Activated CD4-positive, alpha-beta T cell treated with anti-CD3 and anti-CD28 coated beads, Interleukin-2, amount 10 ng/mL, durations not matched to agents 7 days and 5 days (primary cell): ENCODE measurements at regions of chr2 and their contacts with region 1.

Region 1: DNA sequence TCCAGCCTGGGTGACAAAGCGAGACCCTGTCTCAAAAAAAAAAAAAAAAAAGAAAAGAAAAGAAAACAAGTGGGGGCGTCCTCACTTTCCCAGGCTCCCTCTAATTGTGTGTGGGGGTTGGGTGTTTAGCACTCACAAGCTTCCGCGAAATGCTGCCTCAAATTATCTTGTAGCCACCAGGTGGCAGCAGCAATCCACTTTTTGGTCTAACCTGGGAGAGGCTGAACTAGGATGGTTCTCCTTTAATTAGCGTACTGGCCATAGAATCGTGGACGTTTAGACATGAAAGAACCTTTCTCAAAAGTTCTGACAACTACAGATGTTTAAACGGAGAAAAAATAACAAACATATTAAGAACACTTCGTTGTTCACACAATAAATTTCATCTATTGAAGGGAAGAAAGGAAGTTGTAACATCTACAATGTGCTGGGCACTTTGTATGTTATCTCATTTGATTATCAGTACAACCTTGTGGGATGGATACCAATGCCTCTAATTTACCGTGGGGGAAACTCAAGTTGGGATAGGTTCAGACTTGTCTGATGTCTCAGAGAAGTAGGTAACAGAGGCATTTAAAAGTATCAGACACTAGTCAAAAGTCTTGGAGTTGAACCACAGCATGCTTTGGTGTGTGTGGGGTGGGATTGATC is 122.7 kb upstream of the NABP1 start:
- DNase-seq: peak; percentile 85
- H3K4me3 Mint-ChIP-seq: no peak overlapping the region
- H3K27ac Mint-ChIP-seq: no peak overlapping the region
- H3K4me1 Mint-ChIP-seq: peaks cover 8% of the 10 kb centered on the region
- H3K27me3 Mint-ChIP-seq: peaks cover 16% of the 10 kb centered on the region

Region 2: GRCh38 chr2:191501561-191502168 is 53.6 kb before region 1 on chr2:
- CTCF ChIA-PET with region 1: no interaction called
- POLR2A ChIA-PET with region 1: no interaction called
- DNase-seq: no peak
- H3K4me3 Mint-ChIP-seq: no peak overlapping the region
- H3K27ac Mint-ChIP-seq: no peak overlapping the region
- H3K4me1 Mint-ChIP-seq: no peaks in the 10 kb centered on the region
- H3K27me3 Mint-ChIP-seq: peaks cover 5% of the 10 kb centered on the region

Region 3: DNA sequence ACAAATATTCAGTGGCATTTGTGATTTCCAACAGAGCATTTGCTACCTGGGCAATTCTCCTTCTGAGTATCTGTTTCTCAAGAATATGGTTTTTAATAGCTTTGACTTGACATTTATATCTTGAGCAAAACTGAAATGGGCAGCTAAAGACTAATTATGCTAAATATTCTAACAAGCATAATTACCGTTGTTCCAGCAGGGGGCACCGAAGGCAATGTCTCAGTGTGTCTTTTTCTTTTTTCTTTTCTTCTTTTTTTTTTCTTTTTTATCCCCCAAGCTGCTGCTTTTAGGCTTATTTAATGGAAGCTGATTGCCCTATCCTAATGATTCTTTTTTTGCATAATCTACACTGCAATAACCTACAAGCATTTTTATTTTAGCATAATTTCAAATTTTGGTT is 16.1 kb before region 1 on chr2:
- CTCF ChIA-PET with region 1: no interaction called
- POLR2A ChIA-PET with region 1: no interaction called
- DNase-seq: peak; percentile 52
- H3K4me3 Mint-ChIP-seq: no peak overlapping the region
- H3K27ac Mint-ChIP-seq: no peak overlapping the region
- H3K4me1 Mint-ChIP-seq: no peaks in the 10 kb centered on the region
- H3K27me3 Mint-ChIP-seq: peaks cover 3% of the 10 kb centered on the region

Region 4: GRCh38 chr2:191582355-191582754 is 27.1 kb after region 1 on chr2:
- CTCF ChIA-PET with region 1: no interaction called
- POLR2A ChIA-PET with region 1: no interaction called
- DNase-seq: no peak
- H3K4me3 Mint-ChIP-seq: no peak overlapping the region
- H3K27ac Mint-ChIP-seq: no peak overlapping the region
- H3K4me1 Mint-ChIP-seq: peaks cover 4% of the 10 kb centered on the region
- H3K27me3 Mint-ChIP-seq: peaks cover 11% of the 10 kb centered on the region

Region 5: DNA sequence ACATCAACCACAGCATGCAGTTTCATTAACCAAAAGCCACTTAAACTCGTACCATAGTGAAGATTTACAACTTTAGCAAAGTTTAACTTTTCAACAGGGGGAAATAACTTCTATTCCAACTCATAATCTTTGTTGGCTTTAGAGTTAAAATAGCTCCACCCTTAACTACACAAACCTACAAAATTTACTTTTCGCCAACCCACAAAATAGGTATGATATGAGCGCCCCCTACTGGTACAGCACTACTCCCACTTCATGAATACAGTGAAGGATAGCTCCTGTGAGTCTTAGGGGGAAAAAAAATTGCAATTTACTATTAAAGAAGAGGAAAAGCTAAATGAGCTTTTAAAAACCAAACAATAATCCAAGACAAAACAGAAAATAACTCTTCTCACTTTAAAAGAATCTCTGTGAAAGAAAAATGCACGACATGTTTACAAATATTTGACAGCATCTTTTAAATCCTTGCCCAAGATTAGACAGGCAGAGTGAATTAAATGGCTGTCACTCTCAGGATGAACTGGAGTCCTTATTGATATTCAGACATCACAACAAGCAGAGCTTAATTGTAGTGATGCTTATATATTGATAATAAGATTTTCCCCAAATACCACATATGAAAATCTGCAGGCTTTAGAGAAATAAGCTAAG is 607.3 kb after region 1 on chr2:
- CTCF ChIA-PET with region 1: interaction called, 25 read pairs
- POLR2A ChIA-PET with region 1: no interaction called
- DNase-seq: peak; percentile 80
- H3K4me3 Mint-ChIP-seq: no peak overlapping the region
- H3K27ac Mint-ChIP-seq: no peak overlapping the region
- H3K4me1 Mint-ChIP-seq: peaks cover 11% of the 10 kb centered on the region
- H3K27me3 Mint-ChIP-seq: peaks cover 16% of the 10 kb centered on the region